CD4-positive, alpha-beta T cell (primary cell): ENCODE measurements at regions of chr10 and their contacts with region 1.

Region 1: DNA sequence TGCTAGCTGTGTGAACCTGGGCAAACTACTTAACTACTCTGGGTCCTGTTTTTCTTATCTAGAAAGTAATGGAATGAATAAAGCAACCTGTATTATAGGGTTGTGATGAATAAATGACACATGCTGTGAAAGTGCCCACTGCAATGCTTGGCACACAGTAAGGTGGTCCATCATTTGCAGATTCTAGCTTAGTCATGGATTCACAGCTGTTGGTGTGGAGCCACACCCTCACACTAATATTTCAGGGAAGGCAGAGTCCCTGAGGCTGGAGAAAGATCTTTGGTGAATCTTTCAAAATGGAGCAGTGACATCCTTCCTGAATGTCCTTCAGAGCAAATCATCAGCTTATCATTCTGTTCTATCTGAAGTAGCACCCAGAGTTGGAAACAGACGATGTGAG is 60.6 kb downstream of the A1CF start:
- DNase-seq: no peak
- ATAC-seq: no peak
- H3K4me3 ChIP-seq: no peak overlapping the region
- H3K4me3 Mint-ChIP-seq: no peak overlapping the region
- H3K27ac ChIP-seq: no peak overlapping the region
- H3K27ac Mint-ChIP-seq: no peak overlapping the region
- H3K4me1 ChIP-seq: no peaks in the 10 kb centered on the region
- H3K4me1 Mint-ChIP-seq: no peaks in the 10 kb centered on the region
- H3K27me3 ChIP-seq: no peaks in the 10 kb centered on the region
- H3K27me3 Mint-ChIP-seq: peaks cover 55% of the 10 kb centered on the region
- CTCF ChIP-seq: no peak

Region 2: DNA sequence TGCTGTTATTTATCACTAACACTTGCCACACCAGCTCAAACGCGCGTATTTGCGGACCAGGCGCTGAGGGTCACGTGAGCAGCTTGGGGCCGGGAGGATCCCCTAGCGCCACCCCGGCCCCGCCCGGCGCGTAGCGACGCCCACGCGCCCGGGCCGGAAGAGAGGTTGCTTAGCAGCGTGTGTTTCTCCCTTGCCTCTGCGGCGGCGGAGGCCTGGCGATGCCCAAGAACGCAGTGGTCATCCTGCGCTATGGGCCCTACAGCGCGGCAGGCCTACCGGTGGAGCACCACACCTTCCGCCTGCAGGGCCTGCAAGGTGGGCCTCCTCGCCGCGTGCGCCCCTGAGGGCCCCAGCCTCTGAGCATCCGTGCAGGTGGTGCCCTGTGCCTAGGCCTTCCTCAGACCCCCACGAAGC is 1145.3 kb before region 1 on chr10 and contains the start of gene C10orf53:
- CTCF ChIA-PET with region 1: no interaction called
- POLR2A ChIA-PET with region 1: no interaction called
- intact Hi-C with region 1: no loop called
- DNase-seq: no peak
- ATAC-seq: no peak
- H3K4me3 ChIP-seq: no peak within 1 kb of the TSS
- H3K4me3 Mint-ChIP-seq: no peak within 1 kb of the TSS
- H3K27ac ChIP-seq: no peak within 1 kb of the TSS
- H3K27ac Mint-ChIP-seq: no peak within 1 kb of the TSS
- H3K4me1 ChIP-seq: no peaks in the 10 kb centered on the region
- H3K4me1 Mint-ChIP-seq: no peaks in the 10 kb centered on the region
- H3K27me3 ChIP-seq: peaks cover 3 to 20% of the 10 kb centered on the region in 2 experiments
- H3K27me3 Mint-ChIP-seq: peaks cover 62% of the 10 kb centered on the region
- CTCF ChIP-seq: no peak
- total RNA-seq, gene C10orf53: not detected

Region 3: DNA sequence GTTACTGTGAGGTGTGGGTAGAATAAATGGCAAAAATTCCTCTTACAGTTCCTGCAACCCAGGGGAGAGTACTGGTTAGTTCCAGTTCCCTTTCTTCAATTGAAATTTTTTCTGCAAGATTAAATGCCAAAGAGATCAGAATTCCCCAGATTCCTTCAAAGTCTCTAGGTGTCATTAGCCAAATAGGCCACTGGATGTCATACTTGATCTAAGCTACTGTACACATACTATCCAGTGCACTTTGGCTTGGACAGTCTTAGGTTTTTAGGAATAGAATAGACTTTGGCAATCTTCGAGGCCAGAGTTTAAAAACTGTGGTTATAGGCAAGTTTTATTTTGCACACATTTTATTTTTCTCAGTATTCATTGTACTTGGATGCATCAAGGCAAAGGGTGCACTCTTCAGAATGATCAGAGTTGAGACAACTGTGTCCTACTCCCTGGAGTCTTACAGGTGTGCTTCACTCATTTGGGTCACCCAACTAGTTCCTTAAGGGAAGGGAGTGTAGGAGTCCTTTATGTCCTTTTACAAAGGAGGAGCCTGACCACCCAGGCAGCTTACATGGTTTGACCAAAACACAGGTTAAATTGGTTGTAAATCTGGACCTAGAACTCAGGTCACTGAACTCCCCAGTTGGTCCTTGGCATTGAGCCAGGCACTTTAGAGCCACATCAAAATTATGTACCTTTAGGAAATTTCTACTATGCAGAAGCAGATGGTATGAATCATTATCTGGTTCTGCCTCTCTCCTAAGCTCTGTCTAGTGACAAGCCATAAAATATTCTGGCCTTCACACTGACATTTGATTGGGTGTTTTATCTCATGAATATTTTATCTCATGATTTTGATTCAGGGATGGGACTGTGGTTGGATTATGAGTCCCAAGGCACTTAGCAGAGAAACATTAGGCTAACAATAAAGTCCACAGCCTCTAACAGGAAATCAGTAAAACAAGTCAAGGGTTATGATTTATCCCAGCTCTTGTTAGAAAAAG is 35.5 kb before region 1 on chr10:
- CTCF ChIA-PET with region 1: no interaction called
- POLR2A ChIA-PET with region 1: no interaction called
- intact Hi-C with region 1: no loop called
- DNase-seq: no peak
- ATAC-seq: no peak
- H3K4me3 ChIP-seq: no peak overlapping the region
- H3K4me3 Mint-ChIP-seq: no peak overlapping the region
- H3K27ac ChIP-seq: no peak overlapping the region
- H3K27ac Mint-ChIP-seq: no peak overlapping the region
- H3K4me1 ChIP-seq: peaks cover 3% of the 10 kb centered on the region
- H3K4me1 Mint-ChIP-seq: peaks cover 12% of the 10 kb centered on the region
- H3K27me3 ChIP-seq: no peaks in the 10 kb centered on the region
- H3K27me3 Mint-ChIP-seq: peaks cover 14% of the 10 kb centered on the region
- CTCF ChIP-seq: no peak

Region 4: DNA sequence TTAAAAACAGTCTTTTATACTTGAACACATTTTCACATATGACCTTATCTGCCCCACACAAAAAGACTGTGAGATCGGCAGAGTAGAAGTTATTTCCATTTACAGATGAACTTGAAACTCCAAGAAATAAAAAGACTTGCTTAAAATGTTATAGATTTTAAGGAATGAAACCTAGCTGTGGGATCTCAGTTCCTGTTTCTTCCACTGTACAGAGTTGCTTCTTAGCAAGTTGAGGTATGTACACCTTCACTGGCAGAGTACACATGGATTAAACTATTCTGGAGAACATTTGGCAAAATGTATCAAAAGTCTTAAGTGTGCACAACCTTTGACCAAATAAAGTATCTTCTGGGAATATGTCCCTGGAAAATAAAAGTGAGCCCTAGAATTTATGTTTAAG is 12.3 kb after region 1 on chr10:
- CTCF ChIA-PET with region 1: no interaction called
- POLR2A ChIA-PET with region 1: no interaction called
- intact Hi-C with region 1: no loop called
- DNase-seq: no peak
- ATAC-seq: no peak
- H3K4me3 ChIP-seq: no peak overlapping the region
- H3K4me3 Mint-ChIP-seq: no peak overlapping the region
- H3K27ac ChIP-seq: no peak overlapping the region
- H3K27ac Mint-ChIP-seq: no peak overlapping the region
- H3K4me1 ChIP-seq: no peaks in the 10 kb centered on the region
- H3K4me1 Mint-ChIP-seq: no peaks in the 10 kb centered on the region
- H3K27me3 ChIP-seq: peaks cover 0 to 3% of the 10 kb centered on the region in 2 experiments
- H3K27me3 Mint-ChIP-seq: peaks cover 29% of the 10 kb centered on the region
- CTCF ChIP-seq: no peak

Region 5: DNA sequence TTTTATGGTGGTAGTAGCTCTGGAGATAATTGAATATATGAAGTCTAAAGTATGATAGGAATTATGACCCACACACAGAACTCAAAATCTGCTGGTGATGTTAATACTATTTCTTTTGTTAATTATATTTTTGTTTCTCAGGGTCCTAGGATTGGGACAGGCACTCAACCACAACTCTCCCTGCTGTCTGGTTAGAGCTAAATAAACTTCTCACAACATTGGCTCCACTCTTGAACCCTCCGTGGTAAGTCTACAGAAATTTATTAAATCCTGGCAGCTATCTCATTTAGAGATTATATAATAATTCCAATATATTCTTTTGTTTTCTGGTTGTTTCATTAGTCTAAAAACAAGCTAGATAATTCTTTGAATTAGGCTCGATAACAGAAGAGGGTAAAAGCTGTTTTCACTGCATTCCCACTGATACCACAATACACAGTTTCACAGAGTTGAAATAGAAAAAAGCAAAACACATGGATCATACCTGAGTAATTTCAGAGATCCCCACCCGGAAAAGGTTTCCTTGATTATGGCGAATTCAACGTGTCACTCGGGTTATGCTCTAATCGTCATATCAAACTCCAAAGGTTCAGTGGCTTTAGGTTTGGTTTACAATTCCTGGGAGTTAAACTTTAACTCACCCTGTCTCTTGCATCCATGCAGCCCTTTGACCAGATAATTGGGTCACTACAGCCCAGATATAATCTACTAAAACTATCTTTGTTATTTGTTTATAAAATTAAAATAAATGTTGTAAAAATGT is 60.5 kb after region 1 on chr10 and contains the start of gene A1CF:
- CTCF ChIA-PET with region 1: no interaction called
- POLR2A ChIA-PET with region 1: no interaction called
- intact Hi-C with region 1: loop called in 1 of 2 experiments (anchors 10 kb)
- DNase-seq: no peak
- ATAC-seq: no peak
- H3K4me3 ChIP-seq: no peak within 1 kb of the TSS
- H3K4me3 Mint-ChIP-seq: no peak within 1 kb of the TSS
- H3K27ac ChIP-seq: no peak within 1 kb of the TSS
- H3K27ac Mint-ChIP-seq: no peak within 1 kb of the TSS
- H3K4me1 ChIP-seq: no peaks in the 10 kb centered on the region
- H3K4me1 Mint-ChIP-seq: no peaks in the 10 kb centered on the region
- H3K27me3 ChIP-seq: peaks cover 0 to 13% of the 10 kb centered on the region in 2 experiments
- H3K27me3 Mint-ChIP-seq: peaks cover 15% of the 10 kb centered on the region
- CTCF ChIP-seq: no peak
- total RNA-seq, gene A1CF: not detected

Region 6: DNA sequence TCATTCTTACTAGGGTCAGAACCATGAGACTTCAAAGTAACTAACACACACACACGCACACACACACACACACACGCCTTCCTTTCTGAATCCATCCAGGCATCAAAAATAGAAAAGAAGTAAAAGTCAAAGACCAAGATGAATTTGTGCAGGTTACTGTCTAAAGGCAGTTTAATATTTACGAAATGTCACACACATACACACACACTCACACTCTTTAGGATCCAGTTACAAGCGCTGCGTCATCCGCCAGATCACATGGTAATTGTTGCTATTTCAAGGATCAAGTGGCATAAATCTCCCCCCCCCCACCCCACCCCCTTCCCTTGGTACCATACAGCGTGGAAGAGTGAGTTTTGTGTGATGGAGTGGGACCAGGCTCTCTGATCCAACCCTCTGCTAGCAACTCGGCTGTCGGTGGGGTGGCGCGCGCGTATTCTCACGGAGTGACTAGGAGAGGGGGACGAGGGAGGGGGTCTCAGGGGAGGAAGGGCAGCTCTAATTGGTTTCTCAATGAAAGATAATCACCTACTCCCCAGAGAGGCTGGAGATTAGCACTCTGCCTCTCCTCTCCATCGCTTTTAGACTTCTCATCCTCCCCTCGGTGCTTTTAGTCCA is 165.9 kb after region 1 on chr10:
- CTCF ChIA-PET with region 1: no interaction called
- POLR2A ChIA-PET with region 1: no interaction called
- intact Hi-C with region 1: no loop called
- DNase-seq: no peak
- ATAC-seq: no peak
- H3K4me3 ChIP-seq: no peak overlapping the region
- H3K4me3 Mint-ChIP-seq: no peak overlapping the region
- H3K27ac ChIP-seq: no peak overlapping the region
- H3K27ac Mint-ChIP-seq: no peak overlapping the region
- H3K4me1 ChIP-seq: peaks cover 6% of the 10 kb centered on the region
- H3K4me1 Mint-ChIP-seq: peaks cover 9% of the 10 kb centered on the region
- H3K27me3 ChIP-seq: peaks cover 30 to 43% of the 10 kb centered on the region in 2 experiments
- H3K27me3 Mint-ChIP-seq: peaks cover 67% of the 10 kb centered on the region
- CTCF ChIP-seq: no peak